ENCODE measurements at regions of chr2 and their contacts with region 1.

Region 1: GRCh38 chr2:54704688-54705605 is 18.5 kb upstream of the EML6 start:
- DNase-seq: no peak

Region 2: GRCh38 chr2:53826587-53827397 is 878.2 kb before region 1 on chr2:
- intact Hi-C with region 1: no loop called
- DNase-seq: no peak

Region 3: GRCh38 chr2:54106631-54107454 is 598.1 kb before region 1 on chr2:
- intact Hi-C with region 1: loop called (anchors 1 kb)
- DNase-seq: peak in 8 of 10 donors; percentile 23 to 87 (median 54)

Region 4: DNA sequence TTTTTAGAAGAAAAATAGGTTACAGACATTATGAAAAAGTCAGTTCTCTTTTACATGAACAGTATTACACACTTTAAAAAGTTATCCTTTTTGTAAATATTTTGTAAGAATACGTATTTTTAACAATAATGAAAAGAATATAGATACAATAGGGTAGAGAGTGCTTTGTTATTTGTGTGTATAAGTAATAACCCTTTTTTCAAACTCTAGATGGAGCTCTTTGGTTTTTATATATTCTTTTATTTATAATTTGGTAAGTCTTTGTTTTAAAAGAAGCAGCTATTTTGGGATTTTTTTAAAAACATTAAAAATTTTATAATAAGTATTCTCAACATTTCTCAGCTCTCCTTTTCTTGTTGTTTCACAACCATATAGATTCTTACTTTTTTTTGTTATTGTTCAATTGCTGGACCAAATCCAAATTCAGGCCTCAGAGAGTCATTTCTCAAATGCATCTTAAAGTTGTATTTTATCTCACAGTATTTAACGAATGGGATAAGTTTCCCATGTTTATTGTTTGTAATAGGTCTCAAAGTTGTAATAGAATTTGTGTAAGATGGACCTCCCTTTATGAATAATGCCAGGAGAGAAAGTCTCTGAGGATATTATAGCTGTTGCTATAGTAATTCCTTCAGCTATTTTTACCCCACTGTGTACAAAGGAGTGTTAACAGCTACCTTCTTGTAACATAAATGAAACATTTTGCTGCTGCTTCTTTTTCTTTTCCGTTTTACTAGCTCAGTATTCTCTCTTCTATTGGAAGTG is 543.1 kb before region 1 on chr2:
- intact Hi-C with region 1: loop called (anchors 10 kb)
- DNase-seq: no peak

Region 5: DNA sequence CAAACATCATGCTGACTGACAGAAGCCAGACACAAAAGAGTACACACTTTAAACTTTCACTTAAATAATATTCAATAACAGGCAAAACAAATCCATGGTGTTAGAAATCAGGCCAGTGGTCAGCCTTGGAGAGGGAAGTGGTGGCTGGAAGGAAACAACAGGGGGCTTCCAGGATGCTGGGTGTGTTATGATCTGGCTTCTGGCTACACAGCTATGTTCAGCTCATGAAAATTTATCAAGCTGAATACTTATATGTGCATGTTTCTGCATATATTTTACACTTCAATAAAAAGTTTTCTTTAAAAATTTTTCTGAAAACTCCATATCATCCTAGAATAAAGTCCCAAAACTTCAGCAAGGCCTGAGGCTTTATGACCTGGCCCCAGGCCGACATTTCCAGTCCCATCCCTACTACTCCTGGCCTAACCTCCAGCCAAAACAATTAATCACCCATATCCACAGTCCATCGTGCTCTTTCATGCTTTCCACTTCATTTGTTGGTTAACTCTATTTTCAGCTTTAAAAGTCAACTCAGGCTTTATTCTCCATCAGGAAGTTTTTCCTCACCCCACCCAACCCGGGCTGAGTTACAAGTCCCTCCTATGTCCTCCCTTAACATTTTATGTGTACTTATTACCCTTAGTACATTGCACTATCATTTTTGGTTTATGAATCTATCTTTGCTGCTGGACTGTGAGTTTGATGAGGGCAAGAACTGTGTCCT is 276.7 kb before region 1 on chr2:
- intact Hi-C with region 1: no loop called
- DNase-seq: no peak

Region 6: GRCh38 chr2:54522624-54523281 is 182.2 kb before region 1 on chr2:
- intact Hi-C with region 1: loop called (anchors 2 kb)
- DNase-seq: peak in 2 of 10 donors; percentile 33 to 81

Region 7: GRCh38 chr2:54665436-54665856 is 39.5 kb before region 1 on chr2:
- intact Hi-C with region 1: loop called (anchors 5 kb)
- DNase-seq: no peak

Region 8: DNA sequence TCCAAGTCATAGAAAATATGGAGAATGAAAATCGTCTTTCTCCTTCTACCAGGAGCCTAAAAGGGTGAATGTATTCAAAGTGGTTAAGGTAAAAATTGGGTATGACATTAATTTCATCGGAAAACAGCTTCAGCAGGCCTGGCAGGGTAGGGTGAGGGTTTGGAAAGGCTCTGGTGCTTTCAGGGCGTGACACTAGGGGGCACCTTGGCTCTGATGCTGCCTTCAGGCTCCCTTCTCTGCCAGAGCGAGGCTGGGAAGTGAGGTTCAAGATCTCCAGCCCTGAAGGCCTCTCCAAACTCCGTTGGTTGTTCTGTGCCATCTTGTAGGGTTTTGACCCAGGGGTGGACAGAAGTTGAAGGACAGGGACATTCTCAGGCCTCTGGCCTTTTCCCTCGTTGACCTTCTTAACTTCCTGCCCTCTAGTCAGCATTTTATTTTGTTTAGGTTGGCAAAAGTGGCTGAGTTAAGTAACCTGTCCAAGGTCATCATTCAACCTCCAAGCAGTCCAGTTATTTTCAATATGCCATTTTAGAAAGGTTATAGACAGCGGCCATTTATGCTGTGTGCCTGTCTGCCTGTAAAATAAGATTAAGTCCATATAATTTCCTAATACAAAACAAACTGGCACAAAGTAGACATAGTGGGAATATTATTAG is 58.8 kb after region 1 on chr2:
- intact Hi-C with region 1: no loop called
- DNase-seq: peak in 1 of 10 donors; percentile 17

Region 9: DNA sequence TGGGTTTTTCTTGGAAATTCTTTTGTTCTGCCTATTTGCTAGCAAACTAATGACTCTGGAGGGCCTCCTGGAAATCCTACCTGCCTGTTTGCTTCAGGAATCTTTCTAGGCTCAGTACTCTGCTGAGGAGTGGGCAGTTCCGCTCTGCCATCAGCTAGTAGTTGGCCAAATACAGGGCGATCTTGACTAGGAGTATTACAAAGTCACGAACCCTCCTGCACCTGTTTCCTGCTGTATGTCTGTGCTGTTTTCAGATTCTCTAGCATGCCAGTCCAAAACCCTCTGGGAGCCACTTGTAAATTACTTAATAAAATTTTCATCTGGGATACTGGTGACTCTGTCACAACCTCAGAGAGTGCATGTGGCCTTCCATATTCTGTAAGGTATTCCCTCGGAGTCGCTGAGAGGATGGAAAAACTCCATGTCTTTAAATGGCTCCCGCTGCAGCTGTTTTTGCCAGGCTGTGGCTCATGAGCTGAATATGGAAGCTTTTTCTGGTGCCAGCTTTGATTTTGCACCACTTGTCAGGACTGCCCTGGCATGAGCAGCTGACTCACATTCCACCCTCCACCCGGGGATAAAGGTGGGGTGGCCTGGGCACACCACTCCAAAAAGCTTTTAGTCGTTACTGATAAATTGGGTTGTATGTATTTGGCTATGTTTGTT is 222.3 kb after region 1 on chr2:
- intact Hi-C with region 1: no loop called
- DNase-seq: no peak